Activated CD4-positive, alpha-beta T cell treated with anti-CD3 and anti-CD28 coated beads, Interleukin-2, amount 10 ng/mL, durations not matched to agents 24 days and 14 days (primary cell): ENCODE measurements at regions of chr16 and their contacts with region 1.

Region 1: DNA sequence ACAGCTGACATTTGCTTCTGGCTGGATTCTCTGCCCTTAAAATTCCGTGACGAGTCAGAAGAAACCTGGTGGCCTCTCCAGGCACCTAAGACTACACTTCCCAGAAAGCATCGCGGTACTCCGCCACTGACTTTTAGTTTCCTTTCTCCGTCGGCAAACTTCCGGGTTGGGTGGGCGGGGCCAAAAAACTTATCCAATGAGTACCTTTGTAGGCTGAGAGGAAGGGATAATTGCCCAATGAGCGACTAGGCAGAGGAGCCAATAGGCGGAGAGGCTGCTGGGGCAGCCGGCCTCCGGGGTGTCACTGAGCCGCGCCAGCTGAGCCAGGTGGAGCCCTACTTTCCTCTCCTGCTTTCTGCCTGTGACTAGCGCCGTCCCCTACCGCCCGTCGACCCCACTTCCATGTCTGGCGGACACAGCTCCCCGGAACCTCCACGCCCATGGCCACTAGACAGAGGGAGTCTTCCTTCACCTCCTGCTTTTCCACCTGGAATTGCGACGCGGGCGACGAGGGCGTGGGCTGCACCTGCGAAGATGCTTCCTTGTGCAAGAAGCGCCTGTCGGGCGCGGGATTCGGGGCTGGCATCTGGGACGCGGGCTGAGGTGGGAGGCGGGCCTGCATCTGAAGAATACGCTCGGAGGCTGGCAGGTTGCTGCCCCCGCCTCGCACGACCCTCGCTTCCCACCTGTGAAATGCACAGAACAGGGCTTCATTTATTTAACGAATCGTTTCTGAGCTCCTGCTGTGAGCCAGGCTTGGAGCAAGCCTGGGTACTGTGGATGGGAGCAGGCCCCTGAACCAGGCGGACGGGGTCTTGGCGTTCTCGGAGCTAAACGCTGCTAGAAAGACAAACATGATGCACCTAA is 16.5 kb upstream of the ARHGAP17 start:
- DNase-seq: peak; percentile 97
- H3K4me3 Mint-ChIP-seq: peak overlapping the region; percentile 89
- H3K27ac Mint-ChIP-seq: peak overlapping the region; percentile 98
- H3K4me1 Mint-ChIP-seq: peaks cover 39% of the 10 kb centered on the region
- H3K27me3 Mint-ChIP-seq: no peaks in the 10 kb centered on the region

Region 2: GRCh38 chr16:25014500-25015147 is 17.1 kb before region 1 on chr16:
- intact Hi-C with region 1: loop called (anchors 1 kb)
- DNase-seq: peak; percentile 73
- H3K4me3 Mint-ChIP-seq: peak overlapping the region; percentile 98
- H3K27ac Mint-ChIP-seq: peak overlapping the region; percentile 94
- H3K4me1 Mint-ChIP-seq: peaks cover 62% of the 10 kb centered on the region
- H3K27me3 Mint-ChIP-seq: no peaks in the 10 kb centered on the region